ENCODE measurements at regions of chr17 and their contacts with region 1.

Region 1: GRCh38 chr17:80497726-80498241 is 21.4 kb upstream of the NPTX1 start:
- DNase-seq: no peak
- H3K4me3 ChIP-seq: no peak overlapping the region
- H3K4me3 Mint-ChIP-seq: no peak overlapping the region
- H3K27ac ChIP-seq: no peak overlapping the region
- H3K27ac Mint-ChIP-seq: no peak overlapping the region
- H3K4me1 ChIP-seq: no peaks in the 10 kb centered on the region
- H3K4me1 Mint-ChIP-seq: peaks cover 4 to 10% (median 7%) of the 10 kb centered on the region in 3 donors
- H3K27me3 ChIP-seq: no peaks in the 10 kb centered on the region
- H3K27me3 Mint-ChIP-seq: peaks cover 18 to 54% of the 10 kb centered on the region in 2 donors

Region 2: GRCh38 chr17:80673152-80673920 is 175.6 kb after region 1 on chr17:
- CTCF ChIA-PET with region 1: no interaction called
- POLR2A ChIA-PET with region 1: interaction called, 10 read pairs
- DNase-seq: no peak
- H3K4me3 ChIP-seq: no peak overlapping the region
- H3K4me3 Mint-ChIP-seq: peak overlapping the region in 4 of 7 donors; percentile 9 to 23 (median 15)
- H3K27ac ChIP-seq: no peak overlapping the region
- H3K27ac Mint-ChIP-seq: peak overlapping the region in 2 of 8 donors; percentile 26 to 52
- H3K4me1 ChIP-seq: peaks cover 26% of the 10 kb centered on the region
- H3K4me1 Mint-ChIP-seq: peaks cover 32 to 57% (median 52%) of the 10 kb centered on the region in 3 donors
- H3K27me3 ChIP-seq: no peaks in the 10 kb centered on the region
- H3K27me3 Mint-ChIP-seq: no peaks in the 10 kb centered on the region

Measured in CD8-positive, alpha-beta memory T cell (primary cell).